Activated T-helper 2 cell treated with anti-CD3 and anti-CD28 coated beads, Interferon-gamma antibody, Interleukin-2, Interleukin-4, amounts not matched to agents 10 μg/mL and 5 μg/mL and 100 μg/mL, durations not matched to agents 14 hours and 24 hours and 36 hours (primary cell): ENCODE measurements at regions of chr14 and their contacts with region 1.

Region 1: DNA sequence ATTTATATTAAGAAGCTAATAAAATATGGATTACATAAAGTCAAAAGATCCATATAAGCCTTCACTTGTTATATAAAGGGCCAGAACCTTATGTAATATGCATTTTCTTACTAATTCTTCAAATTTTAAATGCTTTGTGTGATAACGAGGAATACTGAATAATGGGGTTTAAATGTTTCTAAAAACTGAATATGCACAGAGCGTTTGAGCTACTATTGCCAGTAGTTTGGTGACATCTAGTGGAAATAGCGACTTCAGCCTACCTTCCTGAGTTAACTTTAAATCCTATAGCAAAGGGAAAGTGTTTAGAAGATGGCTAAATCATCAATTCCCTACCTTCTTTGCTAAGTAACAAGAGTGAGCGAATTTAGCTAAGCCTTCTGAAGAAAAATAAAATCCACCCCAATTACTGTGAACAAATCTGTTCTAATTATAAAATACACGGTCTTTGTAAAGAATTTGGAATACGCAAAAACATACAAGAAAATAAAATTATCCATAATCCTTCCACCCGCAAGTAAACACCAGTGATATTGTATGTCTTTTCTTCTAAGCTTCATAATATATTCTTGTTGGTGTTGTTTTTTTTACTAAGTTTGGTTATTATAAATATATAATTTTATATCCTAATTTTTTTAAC is 115.5 kb upstream of the G2E3 start:
- DNase-seq: no peak
- H3K4me3 Mint-ChIP-seq: no peak overlapping the region
- H3K27ac Mint-ChIP-seq: no peak overlapping the region
- H3K4me1 Mint-ChIP-seq: no peaks in the 10 kb centered on the region
- H3K27me3 Mint-ChIP-seq: peaks cover 3% of the 10 kb centered on the region

Region 2: GRCh38 chr14:28751467-28752058 is 1691.9 kb before region 1 on chr14:
- intact Hi-C with region 1: loop called (anchors 10 kb)
- DNase-seq: no peak
- H3K4me3 Mint-ChIP-seq: no peak overlapping the region
- H3K27ac Mint-ChIP-seq: no peak overlapping the region
- H3K4me1 Mint-ChIP-seq: no peaks in the 10 kb centered on the region
- H3K27me3 Mint-ChIP-seq: peaks cover 21% of the 10 kb centered on the region

Region 3: DNA sequence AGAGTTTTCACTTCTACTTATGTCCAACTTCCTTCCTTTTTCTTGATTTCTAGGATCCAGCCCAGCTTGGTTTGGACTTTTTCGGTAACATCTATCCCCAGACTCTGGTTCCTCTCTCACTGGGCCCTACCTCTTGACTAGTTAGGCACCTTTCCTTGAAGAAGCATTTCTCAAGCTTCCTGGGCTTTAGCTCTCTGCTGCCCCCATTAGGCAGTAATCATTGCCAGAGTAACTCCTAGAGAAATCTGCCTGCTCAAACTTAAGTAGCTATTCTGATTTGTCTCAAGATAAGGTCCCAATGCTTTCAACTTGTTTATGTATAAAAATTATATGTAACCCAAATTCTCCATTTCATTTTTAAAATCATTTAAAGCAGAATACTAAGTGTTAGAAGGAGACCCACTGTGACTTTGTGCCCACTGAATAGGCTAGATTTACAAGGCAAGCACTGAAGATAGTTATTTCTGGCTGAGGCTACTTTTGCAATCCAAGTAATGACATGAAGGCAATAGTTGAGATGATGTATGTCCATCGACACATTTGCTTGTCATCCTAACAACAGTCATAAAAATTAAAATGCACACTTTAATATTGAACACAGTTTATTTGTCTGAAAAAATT is 159.6 kb before region 1 on chr14:
- intact Hi-C with region 1: loop called (anchors 10 kb)
- DNase-seq: no peak
- H3K4me3 Mint-ChIP-seq: no peak overlapping the region
- H3K27ac Mint-ChIP-seq: no peak overlapping the region
- H3K4me1 Mint-ChIP-seq: peaks cover 2% of the 10 kb centered on the region
- H3K27me3 Mint-ChIP-seq: no peaks in the 10 kb centered on the region

Region 4: DNA sequence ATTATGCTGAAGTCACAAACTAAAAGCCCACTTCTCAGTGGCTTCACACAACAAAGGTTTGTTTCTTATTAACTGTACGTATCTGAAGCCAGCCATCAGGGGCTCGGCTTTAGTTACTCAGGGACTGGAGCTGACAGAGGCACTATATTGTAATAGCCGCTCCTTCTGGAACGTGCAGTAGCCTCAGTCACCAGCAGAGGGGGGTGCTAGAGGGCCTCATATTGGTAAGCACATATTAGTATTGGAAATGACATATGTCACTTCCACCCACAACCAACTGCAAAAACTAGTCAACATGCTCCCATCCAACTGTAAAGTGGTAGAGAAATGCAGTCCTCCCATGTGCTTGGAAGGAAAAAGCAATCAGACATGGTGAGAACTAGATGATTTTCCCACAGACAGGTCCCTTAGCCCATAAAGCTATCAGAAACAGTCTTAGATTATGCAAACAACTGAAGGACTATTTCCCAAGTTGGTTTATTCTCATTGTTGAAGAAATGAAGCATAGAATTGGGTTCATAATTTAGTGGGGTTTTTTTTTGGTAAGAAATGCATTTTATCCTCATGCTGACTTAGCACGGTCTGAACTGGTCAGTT is 68.1 kb before region 1 on chr14:
- intact Hi-C with region 1: loop called (anchors 1 kb)
- DNase-seq: peak; percentile 40
- H3K4me3 Mint-ChIP-seq: no peak overlapping the region
- H3K27ac Mint-ChIP-seq: no peak overlapping the region
- H3K4me1 Mint-ChIP-seq: no peaks in the 10 kb centered on the region
- H3K27me3 Mint-ChIP-seq: peaks cover 17% of the 10 kb centered on the region

Region 5: DNA sequence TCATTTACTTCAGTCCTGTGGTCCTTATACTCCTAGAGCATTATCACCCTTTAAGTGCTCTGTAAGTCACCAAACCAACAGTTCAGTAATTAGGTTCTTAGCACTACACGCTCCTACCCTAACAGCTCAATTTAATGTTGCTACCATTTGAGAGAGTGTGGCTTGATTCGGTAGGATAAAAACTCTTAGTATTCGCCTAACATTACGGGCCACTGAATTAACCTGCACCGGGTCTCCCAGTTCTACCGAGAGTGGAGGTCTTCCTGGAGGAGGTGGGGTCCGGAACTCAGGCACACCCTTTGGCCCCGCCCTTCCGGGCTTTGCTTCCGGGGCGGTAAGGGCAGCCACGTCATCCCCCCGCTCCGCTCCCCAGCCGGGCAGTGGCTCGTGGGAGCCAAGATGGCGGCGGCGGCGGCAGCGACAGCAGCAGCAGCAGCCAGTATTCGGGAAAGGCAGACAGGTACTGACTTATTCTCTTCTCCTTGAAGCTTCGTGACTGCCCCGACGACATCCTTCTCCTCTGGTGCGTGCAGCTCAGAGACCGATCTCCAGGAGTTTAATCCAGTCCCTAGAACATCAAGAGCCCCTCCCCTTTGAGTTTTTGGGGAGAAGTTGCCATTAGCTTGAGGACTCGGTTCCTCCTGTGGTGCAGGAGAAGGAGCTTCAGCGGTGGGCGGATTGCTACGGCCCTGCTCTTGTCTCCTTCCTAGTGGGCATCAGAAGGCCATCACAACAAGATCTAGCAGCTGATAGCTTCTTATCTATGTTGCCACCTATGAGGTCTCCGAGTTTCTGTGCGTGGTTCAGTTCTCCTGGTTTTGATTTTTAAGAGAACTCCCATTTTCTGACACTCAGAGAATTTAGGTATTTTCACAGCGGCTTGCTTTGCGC is 178.7 kb after region 1 on chr14 and contains the start of gene SCFD1:
- intact Hi-C with region 1: no loop called
- DNase-seq: peak; percentile 93
- H3K4me3 Mint-ChIP-seq: peak within 1 kb of the TSS; percentile 95
- H3K27ac Mint-ChIP-seq: peak within 1 kb of the TSS; percentile 94
- H3K4me1 Mint-ChIP-seq: peaks cover 29% of the 10 kb centered on the region
- H3K27me3 Mint-ChIP-seq: no peaks in the 10 kb centered on the region
- total RNA-seq, gene SCFD1: 72.8 and 76.1 TPM in 2 replicates